Cardiac septum (tissue), 1 donor: ENCODE measurements at regions of chr9 and their contacts with region 1.

Region 1: GRCh38 chr9:37913480-37914153 is 9.7 kb upstream of the SLC25A51 start:
- DNase-seq: peak; percentile 87

Region 2: GRCh38 chr9:37956904-37957671 is 43.5 kb after region 1 on chr9:
- intact Hi-C with region 1: loop called (anchors 5 kb)
- DNase-seq: no peak

Region 3: DNA sequence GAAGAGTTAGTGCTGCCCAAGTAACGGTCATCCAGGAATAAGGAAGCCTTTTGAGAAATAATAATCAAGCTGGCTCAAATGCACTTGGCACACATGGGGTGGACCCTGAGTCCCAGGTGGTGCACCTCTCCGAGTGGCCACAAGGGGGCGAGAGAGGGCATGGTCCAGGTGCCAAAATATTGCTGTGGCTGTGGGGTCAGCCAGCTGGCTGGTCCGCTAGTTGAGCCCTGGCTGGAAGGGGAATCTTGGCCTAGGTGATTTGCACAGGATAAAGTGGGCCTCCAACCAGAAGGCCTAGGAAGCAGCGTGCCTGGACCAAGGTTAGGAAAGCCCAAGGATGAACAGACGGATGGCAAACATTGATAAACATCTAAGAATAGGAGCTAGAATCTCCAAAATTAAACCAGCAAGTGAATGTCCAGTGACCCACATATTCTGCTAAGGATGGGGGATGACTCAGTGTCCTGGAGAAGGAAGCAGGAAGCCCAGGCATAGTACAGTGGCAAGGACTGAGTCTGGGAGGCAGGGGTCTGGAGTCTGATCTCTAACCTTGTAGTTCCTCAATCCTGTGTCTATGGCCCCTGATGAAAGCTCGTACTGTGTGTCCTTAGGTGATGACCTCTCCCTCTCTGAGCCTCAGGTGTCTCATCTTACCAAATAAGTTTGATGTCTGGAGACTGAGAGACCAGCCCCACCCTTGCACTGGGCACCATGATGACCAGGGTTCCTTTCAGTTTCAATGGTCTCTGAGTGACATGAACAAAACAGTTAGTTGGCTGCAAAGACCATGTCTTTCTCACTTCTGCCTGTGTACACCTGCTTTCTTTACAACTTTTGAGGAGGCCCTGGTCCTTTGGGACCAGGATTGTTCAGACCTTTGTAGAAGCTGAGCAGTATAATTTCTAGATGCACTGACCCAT is 174.6 kb after region 1 on chr9:
- intact Hi-C with region 1: loop called (anchors 5 kb)
- DNase-seq: peak; percentile 89

Region 4: GRCh38 chr9:38160613-38161215 is 247.1 kb after region 1 on chr9:
- intact Hi-C with region 1: loop called (anchors 2 kb)
- DNase-seq: no peak